ENCODE measurements at regions of chr1 and their contacts with region 1.

Region 1: DNA sequence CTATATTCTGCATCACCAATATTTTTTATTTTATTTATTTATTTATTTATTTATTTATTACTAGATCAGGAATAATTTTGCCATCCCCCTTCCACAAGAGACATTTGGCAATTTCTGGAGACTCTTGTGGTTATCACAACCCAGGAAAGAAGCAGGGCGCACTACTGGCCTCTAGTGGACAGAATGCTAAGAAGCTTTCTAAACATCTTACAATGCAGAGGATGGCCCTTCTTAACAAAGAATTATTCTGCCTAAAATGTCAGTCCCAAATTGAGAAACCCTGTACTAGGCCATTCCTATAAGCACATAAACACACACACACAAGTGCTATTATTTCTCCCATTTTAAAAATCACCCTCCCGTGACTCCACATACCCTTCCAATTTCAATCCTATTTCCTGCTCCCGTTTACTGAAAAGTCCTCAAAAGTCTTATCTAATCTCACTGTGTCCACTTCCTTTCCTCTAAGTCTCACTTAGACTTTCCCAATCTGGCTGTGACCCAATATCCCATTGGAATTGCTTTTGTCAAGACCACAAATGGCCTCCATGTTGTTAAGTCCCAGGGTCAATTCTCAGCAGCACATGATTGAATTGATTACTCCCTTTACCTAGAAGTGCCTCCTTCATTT is 43.7 kb upstream of the RNF11 start:
- H3K4me3 ChIP-seq: no peak overlapping the region
- H3K27ac ChIP-seq: no peak overlapping the region
- H3K4me1 ChIP-seq: no peaks in the 10 kb centered on the region
- CTCF ChIP-seq: peak; percentile 39; the same call in 1 of the 2 replicates

Region 2: GRCh38 chr1:50873458-50874187 is 318.7 kb before region 1 on chr1:
- CTCF ChIA-PET with region 1: interaction called, 20 read pairs
- POLR2A ChIA-PET with region 1: no interaction called
- H3K4me3 ChIP-seq: peak overlapping the region; percentile 42
- H3K27ac ChIP-seq: no peak overlapping the region
- H3K4me1 ChIP-seq: no peaks in the 10 kb centered on the region
- CTCF ChIP-seq: no peak

Region 3: GRCh38 chr1:51088488-51088887 is 103.8 kb before region 1 on chr1:
- CTCF ChIA-PET with region 1: interaction called, 37 read pairs
- POLR2A ChIA-PET with region 1: no interaction called
- H3K4me3 ChIP-seq: no peak overlapping the region
- H3K27ac ChIP-seq: no peak overlapping the region
- H3K4me1 ChIP-seq: no peaks in the 10 kb centered on the region
- CTCF ChIP-seq: peak; percentile 29; the same call in 1 of the 2 replicates

Region 4: DNA sequence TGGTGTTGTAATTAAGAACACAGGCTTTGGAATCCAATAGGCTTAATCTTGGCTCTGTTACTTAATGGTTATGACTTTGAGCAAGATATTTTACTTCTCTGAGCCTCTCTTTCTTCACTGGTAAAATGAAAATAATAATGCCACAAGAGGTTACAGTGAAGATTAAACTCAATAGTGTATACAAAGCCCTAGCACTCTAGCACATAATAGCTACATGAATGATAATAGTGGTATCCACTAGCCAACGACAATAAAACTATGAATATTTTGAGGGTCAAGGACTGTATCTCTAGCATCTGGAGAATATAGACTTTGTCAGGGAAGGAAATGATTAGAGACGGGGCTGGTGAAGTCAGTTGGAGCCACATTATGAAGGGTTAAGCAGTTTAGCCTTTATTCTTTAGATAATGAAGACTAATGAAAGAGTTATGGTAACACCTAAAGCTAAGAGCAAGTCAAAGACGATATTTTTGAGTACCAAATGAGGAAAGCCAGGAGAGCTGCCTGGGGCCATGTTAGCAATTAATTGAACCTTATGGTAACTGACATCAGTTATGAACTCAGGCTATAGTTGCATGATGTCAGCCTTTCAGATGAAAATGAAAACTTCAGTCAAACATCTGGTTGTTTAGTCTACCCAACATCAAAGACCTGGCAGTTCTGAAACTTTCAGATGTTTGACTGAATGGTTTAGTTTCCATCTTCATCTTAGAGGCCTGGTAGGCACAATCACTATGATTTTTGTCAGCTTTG is 11.0 kb after region 1 on chr1:
- CTCF ChIA-PET with region 1: interaction called, 13 read pairs
- POLR2A ChIA-PET with region 1: no interaction called
- H3K4me3 ChIP-seq: no peak overlapping the region
- H3K27ac ChIP-seq: no peak overlapping the region
- H3K4me1 ChIP-seq: no peaks in the 10 kb centered on the region
- CTCF ChIP-seq: no peak

Region 5: DNA sequence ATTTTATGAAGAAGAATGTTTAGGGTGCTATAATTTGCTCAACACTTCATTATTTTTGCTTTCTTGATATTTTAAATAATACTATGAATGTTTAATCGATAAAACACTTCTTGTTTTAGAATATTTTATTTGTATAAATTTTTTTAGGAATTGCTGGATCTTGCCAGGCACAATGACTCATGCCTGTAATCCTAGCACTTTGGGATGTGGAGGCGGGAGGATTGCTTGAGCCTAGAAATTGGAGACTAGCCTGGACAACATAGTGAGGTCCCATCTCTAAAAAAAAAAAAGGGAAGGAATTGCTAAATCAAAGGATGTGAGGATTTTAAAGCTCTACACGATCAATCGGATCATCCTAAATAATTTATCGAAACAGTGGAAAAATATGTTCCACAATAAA is 61.4 kb after region 1 on chr1:
- CTCF ChIA-PET with region 1: no interaction called
- POLR2A ChIA-PET with region 1: no interaction called
- H3K4me3 ChIP-seq: no peak overlapping the region
- H3K27ac ChIP-seq: no peak overlapping the region
- H3K4me1 ChIP-seq: peaks cover 7% of the 10 kb centered on the region; the same call in 1 of the 2 replicates
- CTCF ChIP-seq: no peak

Region 6: DNA sequence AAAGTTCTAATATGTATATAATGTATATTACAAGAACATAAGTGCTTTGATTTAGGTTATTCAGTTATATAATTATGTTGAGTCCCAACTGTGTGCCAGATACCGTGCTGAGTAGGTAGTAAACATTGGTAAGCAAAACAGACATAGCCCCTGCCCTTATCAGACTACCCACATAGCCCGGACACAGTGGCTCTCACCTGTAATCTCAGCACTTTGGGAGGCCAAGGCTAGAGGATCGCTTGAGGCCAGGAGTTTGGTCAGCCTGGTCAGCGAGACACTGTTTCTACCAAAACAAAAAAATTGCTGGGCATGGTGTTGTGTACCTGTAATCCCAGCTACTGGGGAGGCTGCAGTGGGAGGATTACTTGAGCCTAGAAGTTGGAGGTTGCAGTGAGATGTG is 74.5 kb after region 1 on chr1:
- CTCF ChIA-PET with region 1: no interaction called
- POLR2A ChIA-PET with region 1: no interaction called
- H3K4me3 ChIP-seq: no peak overlapping the region
- H3K27ac ChIP-seq: no peak overlapping the region
- H3K4me1 ChIP-seq: peaks cover 7% of the 10 kb centered on the region
- CTCF ChIP-seq: no peak